Activated CD8-positive, alpha-beta T cell treated with anti-CD3 and anti-CD28 coated beads, Interleukin-2, amount 10 ng/mL, durations not matched to agents 7 days and 5 days (primary cell): ENCODE measurements at regions of chr2 and their contacts with region 1.

Region 1: DNA sequence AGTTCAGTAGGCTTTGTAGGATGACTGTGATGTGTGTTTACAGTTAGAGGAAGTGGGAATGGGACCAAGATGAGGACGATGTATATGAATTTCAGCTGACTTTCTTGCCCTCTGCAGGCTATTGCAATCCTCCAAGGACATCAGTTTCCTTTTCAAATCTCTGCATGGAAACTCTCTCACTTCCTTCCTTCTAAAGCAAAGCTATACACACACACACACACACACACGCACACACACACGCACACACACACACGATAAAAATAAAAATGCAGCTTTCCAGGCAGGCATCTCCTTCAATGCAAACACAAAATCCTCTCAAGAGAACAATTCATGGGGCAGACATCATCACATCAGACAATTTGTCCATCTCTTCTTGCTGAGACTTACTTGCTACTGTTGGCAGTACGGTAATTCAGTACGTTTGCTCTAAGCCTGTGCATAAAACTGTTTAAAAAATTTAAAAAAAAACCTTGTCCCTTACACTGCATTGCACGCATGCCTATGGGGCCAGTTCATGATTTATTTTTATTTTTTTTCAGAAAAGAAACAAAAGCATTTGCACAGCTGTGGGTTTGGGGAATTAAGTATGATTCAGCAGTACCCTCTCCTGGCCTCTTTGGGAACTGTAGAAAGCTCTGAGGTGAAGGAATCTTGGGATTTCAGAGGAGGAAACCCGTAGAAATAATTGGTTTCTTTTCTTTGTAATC is 27.1 kb upstream of the ICOS start:
- DNase-seq: no peak
- ATAC-seq: peak; percentile 67
- H3K4me3 Mint-ChIP-seq: no peak overlapping the region
- H3K27ac Mint-ChIP-seq: no peak overlapping the region
- H3K4me1 Mint-ChIP-seq: peaks cover 21% of the 10 kb centered on the region
- H3K27me3 Mint-ChIP-seq: peaks cover 8% of the 10 kb centered on the region

Region 2: DNA sequence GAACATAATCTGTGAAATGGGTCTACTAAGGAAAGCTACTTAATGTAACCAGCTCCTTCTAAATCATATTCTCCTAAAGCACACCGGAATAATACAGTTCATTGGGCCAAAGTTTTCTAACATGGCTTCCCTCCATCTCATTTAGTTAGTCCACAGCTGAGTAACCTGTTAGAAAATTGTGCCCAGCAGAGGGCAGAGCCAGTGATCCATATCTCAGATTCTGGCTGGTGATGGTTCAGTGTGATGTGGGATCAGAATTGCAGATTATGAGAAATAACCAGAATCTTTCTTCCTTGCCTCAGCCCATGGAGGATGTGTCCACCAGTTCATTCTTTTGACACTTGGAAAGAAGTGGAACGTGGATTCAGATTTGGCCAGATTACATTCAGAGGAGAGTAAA is 51.2 kb before region 1 on chr2:
- CTCF ChIA-PET with region 1: interaction called, 13 read pairs
- POLR2A ChIA-PET with region 1: no interaction called
- DNase-seq: no peak
- ATAC-seq: peak; percentile 56
- H3K4me3 Mint-ChIP-seq: no peak overlapping the region
- H3K27ac Mint-ChIP-seq: no peak overlapping the region
- H3K4me1 Mint-ChIP-seq: peaks cover 56% of the 10 kb centered on the region
- H3K27me3 Mint-ChIP-seq: no peaks in the 10 kb centered on the region

Region 3: DNA sequence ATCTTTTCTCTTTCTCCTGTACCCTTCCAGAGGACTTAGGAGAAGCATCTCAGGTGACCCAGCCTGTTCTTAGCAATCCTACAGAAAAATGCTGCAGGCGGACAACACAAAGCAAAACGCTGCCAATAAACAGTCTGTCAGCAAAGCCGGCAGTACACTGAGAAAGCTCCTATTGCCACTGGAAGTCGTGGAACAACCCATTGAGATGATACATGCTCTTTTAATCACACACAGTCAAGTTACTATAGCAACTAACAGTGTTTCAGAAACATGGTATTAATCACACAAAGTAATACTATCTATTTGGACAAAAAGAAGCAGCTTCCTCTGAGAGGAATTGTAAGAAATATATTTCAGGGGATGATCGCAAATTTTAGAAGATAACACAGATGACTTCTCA is 31.4 kb before region 1 on chr2:
- CTCF ChIA-PET with region 1: interaction called, 18 read pairs
- POLR2A ChIA-PET with region 1: no interaction called
- DNase-seq: no peak
- ATAC-seq: no peak
- H3K4me3 Mint-ChIP-seq: no peak overlapping the region
- H3K27ac Mint-ChIP-seq: no peak overlapping the region
- H3K4me1 Mint-ChIP-seq: peaks cover 40% of the 10 kb centered on the region
- H3K27me3 Mint-ChIP-seq: no peaks in the 10 kb centered on the region

Region 4: GRCh38 chr2:203897544-203897943 is 11.9 kb before region 1 on chr2:
- CTCF ChIA-PET with region 1: interaction called, 30 read pairs
- POLR2A ChIA-PET with region 1: no interaction called
- DNase-seq: no peak
- ATAC-seq: no peak
- H3K4me3 Mint-ChIP-seq: no peak overlapping the region
- H3K27ac Mint-ChIP-seq: no peak overlapping the region
- H3K4me1 Mint-ChIP-seq: peaks cover 20% of the 10 kb centered on the region
- H3K27me3 Mint-ChIP-seq: no peaks in the 10 kb centered on the region

Region 5: GRCh38 chr2:204081487-204082425 is 172.3 kb after region 1 on chr2:
- CTCF ChIA-PET with region 1: no interaction called
- POLR2A ChIA-PET with region 1: no interaction called
- DNase-seq: no peak
- ATAC-seq: no peak
- H3K4me3 Mint-ChIP-seq: no peak overlapping the region
- H3K27ac Mint-ChIP-seq: no peak overlapping the region
- H3K4me1 Mint-ChIP-seq: no peaks in the 10 kb centered on the region
- H3K27me3 Mint-ChIP-seq: peaks cover 9% of the 10 kb centered on the region

Region 6: DNA sequence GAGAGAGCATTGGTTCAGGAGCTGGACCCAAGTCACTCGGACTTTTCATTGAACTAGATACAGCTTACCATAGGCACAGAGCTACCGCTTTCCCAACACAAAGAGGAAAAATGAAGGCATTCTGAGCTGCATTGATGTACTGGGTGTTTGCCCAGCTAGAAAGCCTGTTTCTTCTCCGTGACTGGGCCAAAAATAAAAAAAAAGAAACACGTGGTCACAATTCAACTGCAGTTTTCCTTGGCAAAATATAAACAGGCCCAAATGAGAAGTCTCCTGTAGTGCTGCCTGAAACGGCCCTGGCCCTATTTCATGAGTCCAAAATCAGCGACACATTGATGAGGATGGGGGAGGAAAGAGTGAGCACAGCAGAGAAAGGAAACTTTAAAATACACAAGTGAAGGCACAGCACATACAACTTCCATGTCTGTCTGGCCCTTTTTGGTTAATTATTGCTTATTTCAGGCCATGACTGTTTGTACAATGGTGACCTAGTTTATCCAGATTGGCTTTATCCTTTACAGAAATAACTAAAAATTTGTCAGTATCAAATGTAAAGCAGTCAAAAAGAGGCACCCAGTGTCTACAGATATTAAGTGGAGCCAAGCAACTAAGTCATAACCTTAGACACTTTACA is 206.9 kb after region 1 on chr2:
- CTCF ChIA-PET with region 1: no interaction called
- POLR2A ChIA-PET with region 1: no interaction called
- DNase-seq: no peak
- ATAC-seq: no peak
- H3K4me3 Mint-ChIP-seq: no peak overlapping the region
- H3K27ac Mint-ChIP-seq: no peak overlapping the region
- H3K4me1 Mint-ChIP-seq: peaks cover 18% of the 10 kb centered on the region
- H3K27me3 Mint-ChIP-seq: peaks cover 16% of the 10 kb centered on the region

Region 7: GRCh38 chr2:204152616-204153015 is 243.2 kb after region 1 on chr2:
- CTCF ChIA-PET with region 1: no interaction called
- POLR2A ChIA-PET with region 1: no interaction called
- DNase-seq: no peak
- ATAC-seq: no peak
- H3K4me3 Mint-ChIP-seq: no peak overlapping the region
- H3K27ac Mint-ChIP-seq: no peak overlapping the region
- H3K4me1 Mint-ChIP-seq: no peaks in the 10 kb centered on the region
- H3K27me3 Mint-ChIP-seq: peaks cover 13% of the 10 kb centered on the region